Activated naive CD4-positive, alpha-beta T cell treated with anti-CD3 and anti-CD28 coated beads for 36 hours (primary cell): ENCODE measurements at regions of chrX and their contacts with region 1.

Region 1: DNA sequence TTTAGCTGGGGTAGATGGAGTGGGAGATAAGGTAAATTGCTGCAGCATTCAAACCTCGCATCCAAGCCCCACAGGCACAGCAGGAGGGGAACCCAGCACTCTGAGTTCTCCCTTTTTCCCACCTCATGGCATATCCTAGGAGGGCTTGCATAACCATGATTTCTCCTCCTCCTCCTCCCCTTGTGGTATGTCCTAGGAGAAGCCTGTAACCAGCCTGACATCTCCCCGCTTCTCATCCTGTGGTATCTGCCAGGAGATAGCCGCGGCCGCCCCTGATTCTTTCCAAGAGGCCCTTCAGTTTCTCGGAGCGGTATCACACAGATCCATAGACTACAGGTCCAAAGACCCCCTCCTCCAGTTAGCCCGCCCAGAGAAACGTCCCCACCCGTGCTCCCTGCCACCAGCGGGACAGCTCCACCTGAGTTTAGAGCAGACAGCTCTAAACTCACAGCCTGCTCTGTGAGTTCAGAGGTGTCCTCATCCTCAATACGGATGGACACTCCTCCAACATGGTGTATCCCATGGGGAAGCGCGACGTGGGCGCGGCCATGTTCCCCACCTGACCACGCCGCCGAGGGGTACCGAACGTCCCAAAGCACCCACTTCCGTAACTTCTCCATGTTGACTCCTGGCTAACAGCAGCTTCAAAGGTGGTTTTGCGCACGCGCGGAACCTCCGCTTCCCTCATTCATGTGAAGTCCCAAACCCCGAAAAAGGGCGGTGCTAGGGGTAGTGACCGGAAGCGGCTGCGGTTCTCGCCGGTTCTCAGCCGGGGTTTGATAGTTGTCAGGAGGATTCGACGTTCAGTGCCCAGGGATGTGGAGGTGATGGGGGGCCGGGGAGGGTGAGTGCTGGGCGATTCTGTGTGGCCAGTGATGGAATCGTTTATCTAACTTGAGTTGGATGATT is at the start of gene ZNF81:
- DNase-seq: peak; percentile 94
- H3K4me3 Mint-ChIP-seq: peak within 1 kb of the TSS; percentile 81
- H3K27ac Mint-ChIP-seq: peak within 1 kb of the TSS; percentile 96
- H3K4me1 Mint-ChIP-seq: peaks cover 18% of the 10 kb centered on the region
- H3K27me3 Mint-ChIP-seq: no peaks in the 10 kb centered on the region
- total RNA-seq, gene ZNF81: 5.8 to 7.2 TPM

Region 2: GRCh38 chrX:47658684-47659515 is 177.5 kb before region 1 on chrX and contains the start of gene UXT:
- CTCF ChIA-PET with region 1: no interaction called
- intact Hi-C with region 1: loop called (anchors 5 kb)
- DNase-seq: peak; percentile 96
- H3K4me3 Mint-ChIP-seq: peak within 1 kb of the TSS; percentile 88
- H3K27ac Mint-ChIP-seq: peak within 1 kb of the TSS; percentile 98
- H3K4me1 Mint-ChIP-seq: peaks cover 46% of the 10 kb centered on the region
- H3K27me3 Mint-ChIP-seq: no peaks in the 10 kb centered on the region
- total RNA-seq, gene UXT: 192 to 198 TPM

Region 3: GRCh38 chrX:47854474-47854873 is 18.1 kb after region 1 on chrX:
- CTCF ChIA-PET with region 1: interaction called, 3 read pairs
- intact Hi-C with region 1: loop called (anchors 1 kb)
- DNase-seq: peak; percentile 47
- H3K4me3 Mint-ChIP-seq: no peak overlapping the region
- H3K27ac Mint-ChIP-seq: no peak overlapping the region
- H3K4me1 Mint-ChIP-seq: peaks cover 4% of the 10 kb centered on the region
- H3K27me3 Mint-ChIP-seq: no peaks in the 10 kb centered on the region

Region 4: DNA sequence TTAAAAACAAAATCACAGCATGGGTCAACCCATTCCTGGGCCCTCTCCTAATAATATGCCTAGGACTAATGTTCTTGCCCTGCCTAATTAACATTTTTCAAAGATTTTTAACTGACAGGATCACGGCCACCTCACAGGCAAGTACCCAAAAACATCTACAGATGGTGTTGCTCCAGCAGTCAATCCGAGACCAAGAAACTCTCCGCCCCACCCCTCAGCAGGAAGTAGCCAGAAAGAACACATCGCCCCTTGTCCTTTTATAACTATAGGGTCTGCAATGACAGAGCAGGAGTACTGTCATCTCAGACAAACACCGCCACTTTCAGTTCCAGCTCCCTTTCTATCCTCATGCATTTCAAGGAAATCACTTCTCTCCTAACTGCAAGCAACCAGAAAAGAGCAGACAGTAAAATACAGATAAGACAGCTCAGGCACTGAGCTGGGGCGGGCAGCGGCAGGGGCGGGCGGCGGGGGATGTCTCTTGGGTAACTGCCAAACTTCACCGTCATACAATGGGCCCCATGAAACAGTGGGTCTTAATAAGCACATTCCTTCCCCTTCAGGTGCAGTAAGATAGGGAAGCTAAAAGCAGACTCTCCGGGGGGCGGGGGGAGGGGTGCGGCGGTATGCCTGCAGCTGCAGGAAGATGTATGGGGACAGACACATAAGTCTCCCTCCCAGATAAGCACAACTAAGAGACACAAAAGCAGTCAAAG is 100.0 kb after region 1 on chrX:
- CTCF ChIA-PET with region 1: no interaction called
- intact Hi-C with region 1: loop called (anchors 10 kb)
- DNase-seq: peak; percentile 55
- H3K4me3 Mint-ChIP-seq: peak overlapping the region; percentile 73
- H3K27ac Mint-ChIP-seq: no peak overlapping the region
- H3K4me1 Mint-ChIP-seq: peaks cover 3% of the 10 kb centered on the region
- H3K27me3 Mint-ChIP-seq: no peaks in the 10 kb centered on the region

Region 5: DNA sequence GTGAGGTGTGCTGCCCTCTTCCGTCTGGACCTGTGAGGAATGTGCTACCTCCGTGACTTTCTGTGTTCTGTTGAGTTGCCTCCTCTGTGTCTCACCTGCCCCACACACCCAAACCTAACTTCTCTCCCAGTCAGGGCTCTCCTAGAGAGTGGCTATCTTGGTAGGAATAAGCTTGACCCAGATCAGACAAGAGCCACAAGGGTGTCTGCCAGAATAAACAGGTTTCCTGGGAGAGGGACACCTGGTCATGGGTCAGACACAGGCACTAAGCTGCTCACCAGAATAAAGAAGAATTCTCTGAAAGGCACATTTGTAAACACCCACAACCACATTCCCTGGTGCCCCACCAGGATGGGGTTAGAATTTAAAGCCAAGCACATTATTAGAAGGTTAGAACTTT is 156.3 kb after region 1 on chrX:
- CTCF ChIA-PET with region 1: no interaction called
- intact Hi-C with region 1: no loop called
- DNase-seq: no peak
- H3K4me3 Mint-ChIP-seq: no peak overlapping the region
- H3K27ac Mint-ChIP-seq: no peak overlapping the region
- H3K4me1 Mint-ChIP-seq: peaks cover 28% of the 10 kb centered on the region
- H3K27me3 Mint-ChIP-seq: no peaks in the 10 kb centered on the region